WTC11 (cell line): ENCODE measurements at regions of chr1 and their contacts with region 1.

Region 1: GRCh38 chr1:119275145-119276134 is 93.1 kb upstream of the HAO2 start:
- DNase-seq: peak; percentile 61
- ATAC-seq: peak; percentile 86
- H3K4me3 Mint-ChIP-seq: no peak overlapping the region
- H3K27ac Mint-ChIP-seq: no peak overlapping the region
- H3K4me1 Mint-ChIP-seq: peaks cover 11% of the 10 kb centered on the region
- H3K27me3 Mint-ChIP-seq: 0 out of 2 replicates have a peak, but pooled peaks cover 2% of the 10 kb centered on the region
- CTCF ChIP-seq: peak; percentile 80

Region 2: GRCh38 chr1:119008483-119009311 is 266.7 kb before region 1 on chr1:
- CTCF ChIA-PET with region 1: interaction called, 21 read pairs
- POLR2A ChIA-PET with region 1: no interaction called
- DNase-seq: no peak
- ATAC-seq: peak; percentile 27
- H3K4me3 Mint-ChIP-seq: peak overlapping the region; percentile 65
- H3K27ac Mint-ChIP-seq: no peak overlapping the region
- H3K4me1 Mint-ChIP-seq: peaks cover 37% of the 10 kb centered on the region
- H3K27me3 Mint-ChIP-seq: peaks cover 92% of the 10 kb centered on the region
- CTCF ChIP-seq: peak; percentile 53

Region 3: DNA sequence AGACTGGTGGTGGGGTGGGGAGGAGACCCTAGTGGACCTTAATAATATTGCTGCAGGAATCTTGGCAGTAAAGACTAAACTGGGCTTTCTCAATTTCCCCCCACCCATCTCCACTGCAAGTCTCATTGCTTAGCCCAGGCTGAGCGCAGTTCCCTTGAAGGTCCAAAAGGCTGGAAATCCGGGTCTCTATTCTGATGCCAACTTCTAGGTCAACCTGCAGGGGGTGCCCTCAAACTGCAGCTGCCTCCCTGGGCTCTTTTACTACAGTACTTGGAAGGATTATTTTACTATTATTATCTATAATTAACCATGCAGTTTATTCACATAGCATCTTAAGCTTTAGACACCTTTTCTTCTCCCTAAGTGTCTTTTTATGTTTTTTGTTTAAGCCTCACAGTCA is 49.6 kb before region 1 on chr1:
- CTCF ChIA-PET with region 1: interaction called, 53 read pairs
- POLR2A ChIA-PET with region 1: no interaction called
- DNase-seq: peak; percentile 39
- ATAC-seq: peak; percentile 86
- H3K4me3 Mint-ChIP-seq: no peak overlapping the region
- H3K27ac Mint-ChIP-seq: no peak overlapping the region
- H3K4me1 Mint-ChIP-seq: peaks cover 13% of the 10 kb centered on the region
- H3K27me3 Mint-ChIP-seq: no peaks in the 10 kb centered on the region
- CTCF ChIP-seq: peak; percentile 50; the same call in 1 of the 2 replicates

Region 4: GRCh38 chr1:119260506-119260905 is 14.9 kb before region 1 on chr1:
- CTCF ChIA-PET with region 1: interaction called, 35 read pairs
- POLR2A ChIA-PET with region 1: no interaction called
- DNase-seq: no peak
- ATAC-seq: no peak
- H3K4me3 Mint-ChIP-seq: no peak overlapping the region
- H3K27ac Mint-ChIP-seq: no peak overlapping the region
- H3K4me1 Mint-ChIP-seq: no peaks in the 10 kb centered on the region
- H3K27me3 Mint-ChIP-seq: no peaks in the 10 kb centered on the region; the same call in 1 of the 2 replicates
- CTCF ChIP-seq: no peak

Region 5: GRCh38 chr1:119294722-119295121 is 19.3 kb after region 1 on chr1:
- CTCF ChIA-PET with region 1: interaction called, 20 read pairs
- POLR2A ChIA-PET with region 1: no interaction called
- DNase-seq: no peak
- ATAC-seq: peak; percentile 79
- H3K4me3 Mint-ChIP-seq: no peak overlapping the region
- H3K27ac Mint-ChIP-seq: peak overlapping the region; percentile 24; the same call in 1 of the 2 replicates
- H3K4me1 Mint-ChIP-seq: peaks cover 38% of the 10 kb centered on the region
- H3K27me3 Mint-ChIP-seq: no peaks in the 10 kb centered on the region
- CTCF ChIP-seq: no peak

Region 6: GRCh38 chr1:119367427-119368124 is 92.1 kb after region 1 on chr1:
- CTCF ChIA-PET with region 1: interaction called, 30 read pairs
- POLR2A ChIA-PET with region 1: no interaction called
- DNase-seq: no peak
- ATAC-seq: peak; percentile 65
- H3K4me3 Mint-ChIP-seq: no peak overlapping the region
- H3K27ac Mint-ChIP-seq: no peak overlapping the region
- H3K4me1 Mint-ChIP-seq: peaks cover 47% of the 10 kb centered on the region
- H3K27me3 Mint-ChIP-seq: peaks cover 17% of the 10 kb centered on the region
- CTCF ChIP-seq: peak; percentile 88

Region 7: GRCh38 chr1:119387858-119388257 is 112.4 kb after region 1 on chr1:
- CTCF ChIA-PET with region 1: interaction called, 16 read pairs
- POLR2A ChIA-PET with region 1: no interaction called
- DNase-seq: peak; percentile 14
- ATAC-seq: peak; percentile 89
- H3K4me3 Mint-ChIP-seq: no peak overlapping the region
- H3K27ac Mint-ChIP-seq: peak overlapping the region; percentile 17; the same call in 1 of the 2 replicates
- H3K4me1 Mint-ChIP-seq: peaks cover 9% of the 10 kb centered on the region
- H3K27me3 Mint-ChIP-seq: no peaks in the 10 kb centered on the region; the same call in 1 of the 2 replicates
- CTCF ChIP-seq: no peak

Region 8: GRCh38 chr1:119462964-119463363 is 187.5 kb after region 1 on chr1:
- CTCF ChIA-PET with region 1: no interaction called
- POLR2A ChIA-PET with region 1: no interaction called
- DNase-seq: no peak
- ATAC-seq: no peak
- H3K4me3 Mint-ChIP-seq: no peak overlapping the region
- H3K27ac Mint-ChIP-seq: no peak overlapping the region
- H3K4me1 Mint-ChIP-seq: peaks cover 17% of the 10 kb centered on the region
- H3K27me3 Mint-ChIP-seq: no peaks in the 10 kb centered on the region
- CTCF ChIP-seq: no peak